ENCODE measurements at regions of chr12 and their contacts with region 1.

Region 1: GRCh38 chr12:104358347-104359003 is 54.9 kb downstream of the EID3 start:
- DNase-seq: peak; percentile 49 to 63
- H3K4me3 ChIP-seq: no peak overlapping the region
- H3K27ac ChIP-seq: no peak overlapping the region
- H3K4me1 ChIP-seq: no peaks in the 10 kb centered on the region
- H3K27me3 ChIP-seq: no peaks in the 10 kb centered on the region
- CTCF ChIP-seq: peak; percentile 69 to 82 (median 78)
- POLR2A ChIP-seq: no peak

Region 2: GRCh38 chr12:104201238-104202001 is 157.1 kb before region 1 on chr12:
- intact Hi-C with region 1: loop called (anchors 5 kb)
- DNase-seq: peak in 1 of 2 donors; percentile 58
- H3K4me3 ChIP-seq: no peak overlapping the region
- H3K27ac ChIP-seq: no peak overlapping the region
- H3K4me1 ChIP-seq: no peaks in the 10 kb centered on the region
- H3K27me3 ChIP-seq: no peaks in the 10 kb centered on the region
- CTCF ChIP-seq: peak; percentile 75 to 87 (median 84)
- POLR2A ChIP-seq: no peak

Region 3: GRCh38 chr12:104250366-104251125 is 107.9 kb before region 1 on chr12:
- intact Hi-C with region 1: no loop called
- DNase-seq: no peak
- H3K4me3 ChIP-seq: no peak overlapping the region
- H3K27ac ChIP-seq: no peak overlapping the region
- H3K4me1 ChIP-seq: no peaks in the 10 kb centered on the region
- H3K27me3 ChIP-seq: no peaks in the 10 kb centered on the region
- CTCF ChIP-seq: no peak
- POLR2A ChIP-seq: no peak

Region 4: DNA sequence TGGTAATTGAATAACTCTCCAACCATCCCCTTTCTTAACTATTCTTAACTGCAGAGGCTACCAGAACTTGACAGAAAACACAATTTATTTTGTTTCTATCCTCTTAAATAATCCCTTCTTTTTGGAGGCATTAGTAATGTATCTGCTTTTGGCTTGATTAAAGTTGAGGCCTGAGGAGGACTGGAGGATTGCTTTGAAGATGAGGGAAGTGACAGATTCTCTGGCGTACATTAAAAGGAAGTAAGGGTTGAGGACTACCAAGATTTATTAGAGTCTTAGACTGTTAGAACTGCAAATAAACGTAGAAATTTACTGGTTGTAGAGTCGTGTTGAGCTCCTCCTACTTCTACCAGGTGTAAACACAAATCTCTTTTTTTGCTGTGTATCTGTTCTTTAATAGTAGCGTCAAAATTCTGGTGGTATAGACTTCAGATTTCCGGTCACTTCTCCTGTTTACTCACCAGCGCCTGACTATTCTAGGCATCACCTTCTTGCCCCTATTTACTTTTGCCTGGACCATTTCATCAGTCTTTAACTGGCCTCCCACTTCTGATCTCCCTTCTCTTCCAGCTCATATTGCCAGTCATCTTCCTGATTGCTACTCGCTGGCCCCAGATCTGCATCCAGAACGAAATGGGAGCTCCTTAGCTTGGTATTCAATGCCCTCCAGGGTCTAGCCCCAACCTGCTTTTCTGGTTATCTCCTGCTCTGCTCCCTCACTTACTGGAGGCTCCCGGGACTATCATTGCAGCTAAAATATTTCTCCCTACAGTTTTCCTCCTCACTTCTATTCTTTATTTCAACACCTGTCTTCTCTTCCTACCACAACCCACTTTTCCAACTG is 63.4 kb before region 1 on chr12:
- intact Hi-C with region 1: no loop called
- DNase-seq: no peak
- H3K4me3 ChIP-seq: no peak overlapping the region
- H3K27ac ChIP-seq: no peak overlapping the region
- H3K4me1 ChIP-seq: no peaks in the 10 kb centered on the region
- H3K27me3 ChIP-seq: no peaks in the 10 kb centered on the region
- CTCF ChIP-seq: no peak
- POLR2A ChIP-seq: no peak

Region 5: GRCh38 chr12:104433061-104433460 is 74.6 kb after region 1 on chr12:
- intact Hi-C with region 1: no loop called
- DNase-seq: no peak
- H3K4me3 ChIP-seq: no peak overlapping the region
- H3K27ac ChIP-seq: no peak overlapping the region
- H3K4me1 ChIP-seq: no peaks in the 10 kb centered on the region
- H3K27me3 ChIP-seq: no peaks in the 10 kb centered on the region
- CTCF ChIP-seq: no peak
- POLR2A ChIP-seq: no peak

Region 6: GRCh38 chr12:104784592-104784991 is 426.1 kb after region 1 on chr12:
- intact Hi-C with region 1: no loop called
- DNase-seq: no peak
- H3K4me3 ChIP-seq: no peak overlapping the region
- H3K27ac ChIP-seq: no peak overlapping the region
- H3K4me1 ChIP-seq: no peaks in the 10 kb centered on the region
- H3K27me3 ChIP-seq: no peaks in the 10 kb centered on the region
- CTCF ChIP-seq: no peak
- POLR2A ChIP-seq: no peak

Measured in uterus (tissue), 4 donors.